PC-9 (cell line): ENCODE measurements at regions of chr1 and their contacts with region 1.

Region 1: DNA sequence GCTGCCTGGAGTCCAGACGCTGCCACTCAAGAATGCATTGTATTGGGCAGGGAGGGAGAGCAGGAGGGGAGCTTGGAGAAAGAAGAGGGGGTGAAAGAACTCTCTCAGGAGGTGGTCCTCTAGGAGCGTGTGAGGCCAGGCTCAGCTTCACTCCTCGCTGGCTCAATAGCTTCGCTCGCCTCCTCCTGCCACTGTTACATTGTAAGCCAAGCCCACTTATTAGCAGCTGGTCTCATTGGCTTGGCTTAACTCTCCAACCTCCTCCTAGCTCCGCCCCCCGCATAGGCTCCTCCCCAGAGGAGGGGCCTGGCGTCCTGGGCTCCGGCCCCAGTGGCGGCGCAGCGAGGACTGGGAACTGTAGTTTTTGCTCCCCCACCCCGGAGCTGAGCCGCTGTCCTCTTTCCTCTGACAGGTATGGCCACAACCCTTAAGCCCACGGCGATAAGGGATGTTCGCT is at the start of gene KCNN3:
- DNase-seq: peak; percentile 42 to 85
- H3K4me3 ChIP-seq: no peak within 1 kb of the TSS
- H3K27ac ChIP-seq: no peak within 1 kb of the TSS
- H3K4me1 ChIP-seq: no peaks in the 10 kb centered on the region
- H3K27me3 ChIP-seq: peaks cover 72% of the 10 kb centered on the region
- CTCF ChIP-seq: no peak
- total RNA-seq, gene KCNN3: 0.33 and 1.1 TPM in 2 replicates

Region 2: GRCh38 chr1:154736841-154737240 is 133.3 kb before region 1 on chr1:
- CTCF ChIA-PET with region 1: no interaction called
- POLR2A ChIA-PET with region 1: interaction called, 10 read pairs
- intact Hi-C with region 1: no loop called
- DNase-seq: no peak
- H3K4me3 ChIP-seq: no peak overlapping the region
- H3K27ac ChIP-seq: no peak overlapping the region
- H3K4me1 ChIP-seq: no peaks in the 10 kb centered on the region
- H3K27me3 ChIP-seq: peaks cover 47% of the 10 kb centered on the region
- CTCF ChIP-seq: no peak

Region 3: GRCh38 chr1:154791292-154792166 is 78.6 kb before region 1 on chr1:
- CTCF ChIA-PET with region 1: no interaction called
- POLR2A ChIA-PET with region 1: interaction called, 30 read pairs
- intact Hi-C with region 1: no loop called
- DNase-seq: peak in 1 of 2 experiments; percentile 16
- H3K4me3 ChIP-seq: no peak overlapping the region
- H3K27ac ChIP-seq: no peak overlapping the region
- H3K4me1 ChIP-seq: no peaks in the 10 kb centered on the region
- H3K27me3 ChIP-seq: peaks cover 85% of the 10 kb centered on the region
- CTCF ChIP-seq: no peak